Spleen (tissue), 13 donors: ENCODE measurements at regions of chr1 and their contacts with region 1.

Region 1: DNA sequence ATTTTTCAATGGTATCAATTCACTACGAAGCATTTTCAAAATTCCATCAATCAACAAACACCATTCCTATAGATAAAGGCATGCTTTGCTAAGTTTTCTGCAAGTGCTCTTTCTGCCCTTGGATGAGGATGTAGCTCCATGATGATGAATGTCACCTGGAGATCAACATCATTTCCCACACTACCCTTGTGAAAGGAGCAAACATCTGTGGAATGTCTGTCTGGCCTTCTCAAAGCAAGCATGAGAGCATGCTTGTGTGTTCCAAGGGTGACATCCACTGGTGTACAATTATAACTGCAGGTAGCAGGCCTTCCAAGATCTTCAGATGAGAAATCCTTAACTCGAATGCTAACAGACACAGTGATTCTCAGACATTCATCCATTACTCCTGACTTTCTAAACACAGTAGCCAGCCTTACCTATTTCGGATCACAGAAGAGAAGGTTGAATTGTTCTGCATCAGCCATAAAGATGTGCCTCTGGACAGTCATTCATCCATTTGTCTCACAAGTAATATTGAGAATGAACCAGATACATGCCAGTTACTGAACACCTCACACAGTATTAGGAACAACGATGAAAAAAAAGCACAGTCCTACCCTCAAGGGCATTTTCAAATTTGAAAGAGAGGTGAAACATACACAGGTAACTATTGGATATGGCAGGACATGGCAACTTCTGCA is 162.4 kb downstream of the TPR start:
- DNase-seq: no peak
- H3K4me3 ChIP-seq: no peak overlapping the region
- H3K27ac ChIP-seq: peak overlapping the region in 4 of 8 donors; percentile 12 to 39 (median 28)
- H3K4me1 ChIP-seq: peaks cover 0 to 15% (median 0%) of the 10 kb centered on the region in 6 donors
- H3K27me3 ChIP-seq: no peaks in the 10 kb centered on the region
- CTCF ChIP-seq: peak; percentile 37 to 90 (median 74)
- POLR2A ChIP-seq: no peak

Region 2: DNA sequence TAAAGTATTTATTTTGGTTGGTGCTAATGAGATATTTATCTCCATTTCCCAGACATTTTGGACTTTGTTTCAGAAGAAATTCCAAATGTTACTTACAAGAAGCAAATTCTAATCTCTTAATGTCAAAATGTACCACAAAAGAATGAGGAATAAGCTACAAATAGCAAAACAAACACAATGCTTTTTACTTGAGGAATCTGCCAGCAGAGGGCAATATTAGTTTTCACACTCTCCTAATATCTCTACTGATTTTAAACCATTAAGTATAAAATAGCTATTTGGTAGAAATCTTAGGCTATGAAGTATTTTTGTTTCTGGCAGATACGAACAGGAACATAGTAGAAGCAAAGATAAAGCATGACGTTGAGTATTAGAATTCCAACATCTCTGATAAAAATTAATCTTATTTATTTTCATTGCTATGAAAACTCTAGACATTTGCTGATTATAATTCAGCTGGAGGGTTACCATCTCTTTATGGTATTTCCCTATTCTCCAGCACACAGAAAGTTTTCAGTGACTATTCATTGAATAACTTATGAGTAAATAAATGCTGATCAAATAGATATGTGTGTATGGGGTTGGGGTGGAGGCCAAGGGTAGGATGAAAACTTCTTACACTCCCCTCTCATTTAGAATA is 491.9 kb before region 1 on chr1:
- intact Hi-C with region 1: loop called (anchors 10 kb)
- DNase-seq: no peak
- H3K4me3 ChIP-seq: no peak overlapping the region
- H3K27ac ChIP-seq: no peak overlapping the region
- H3K4me1 ChIP-seq: peaks cover 0 to 4% (median 0%) of the 10 kb centered on the region in 6 donors
- H3K27me3 ChIP-seq: no peaks in the 10 kb centered on the region
- CTCF ChIP-seq: peak in 8 of 11 experiments; percentile 14 to 61 (median 46)
- POLR2A ChIP-seq: no peak

Region 3: DNA sequence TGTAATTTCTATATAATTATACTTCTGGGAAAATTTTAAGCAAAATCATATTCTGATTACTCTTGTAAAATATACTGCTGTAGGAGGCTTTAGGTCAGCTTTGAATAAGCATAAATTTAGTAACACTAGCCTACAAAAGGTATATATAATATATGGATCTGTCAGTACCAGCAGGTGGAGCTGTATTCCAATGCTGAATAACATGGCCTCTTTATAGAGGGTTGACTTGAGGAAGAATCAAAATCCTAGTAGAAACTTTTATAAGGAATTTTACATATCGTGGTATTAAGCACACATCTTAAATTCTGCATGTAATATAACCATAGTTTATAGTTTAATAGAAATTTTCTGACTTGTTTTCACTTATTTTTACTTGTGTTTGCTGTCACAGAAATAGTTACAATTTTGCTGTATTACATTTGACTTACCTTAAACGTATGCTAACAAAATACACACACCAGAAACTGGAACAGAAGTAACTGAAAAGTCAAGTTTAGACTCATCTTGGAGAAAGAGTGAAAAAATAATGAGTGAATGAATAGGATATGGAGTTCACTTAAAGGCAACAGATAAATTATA is 399.2 kb before region 1 on chr1:
- intact Hi-C with region 1: loop called (anchors 10 kb)
- DNase-seq: no peak
- H3K4me3 ChIP-seq: no peak overlapping the region
- H3K27ac ChIP-seq: no peak overlapping the region
- H3K4me1 ChIP-seq: peaks cover 0 to 4% (median 0%) of the 10 kb centered on the region in 6 donors
- H3K27me3 ChIP-seq: no peaks in the 10 kb centered on the region
- CTCF ChIP-seq: peak in 8 of 11 experiments; percentile 8 to 59 (median 40)
- POLR2A ChIP-seq: no peak

Region 4: DNA sequence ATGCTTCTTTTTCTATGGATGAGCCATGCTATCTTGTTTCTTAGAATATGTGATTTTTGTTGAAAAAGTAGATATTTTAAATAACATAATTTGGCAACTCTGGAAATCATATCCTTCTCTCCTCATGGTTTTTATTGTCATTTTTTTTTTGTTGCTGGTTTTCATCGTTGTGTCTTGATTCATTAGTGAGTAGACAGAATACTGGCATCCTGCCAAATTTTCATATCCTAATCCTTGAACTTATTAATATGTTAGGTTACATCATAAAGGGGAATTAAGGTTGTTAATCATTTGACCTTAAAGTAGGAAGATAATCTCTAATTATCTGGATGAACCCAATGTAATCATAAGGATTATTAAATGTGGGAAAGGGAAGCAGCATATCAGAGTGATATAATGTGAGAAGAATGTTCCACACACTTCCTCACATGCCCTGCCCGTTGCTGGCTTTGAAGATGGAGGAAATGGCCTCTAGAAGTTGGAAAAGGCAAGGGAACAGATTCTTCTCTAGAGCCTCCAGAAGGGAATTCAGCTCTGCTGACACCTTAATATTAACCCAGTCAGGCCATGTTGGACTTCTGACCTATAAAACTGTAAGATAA is 178.8 kb before region 1 on chr1:
- intact Hi-C with region 1: no loop called
- DNase-seq: no peak
- H3K4me3 ChIP-seq: no peak overlapping the region
- H3K27ac ChIP-seq: peak overlapping the region in 6 of 8 donors; percentile 4 to 54 (median 24)
- H3K4me1 ChIP-seq: no peaks in the 10 kb centered on the region
- H3K27me3 ChIP-seq: no peaks in the 10 kb centered on the region
- CTCF ChIP-seq: no peak
- POLR2A ChIP-seq: no peak

Region 5: DNA sequence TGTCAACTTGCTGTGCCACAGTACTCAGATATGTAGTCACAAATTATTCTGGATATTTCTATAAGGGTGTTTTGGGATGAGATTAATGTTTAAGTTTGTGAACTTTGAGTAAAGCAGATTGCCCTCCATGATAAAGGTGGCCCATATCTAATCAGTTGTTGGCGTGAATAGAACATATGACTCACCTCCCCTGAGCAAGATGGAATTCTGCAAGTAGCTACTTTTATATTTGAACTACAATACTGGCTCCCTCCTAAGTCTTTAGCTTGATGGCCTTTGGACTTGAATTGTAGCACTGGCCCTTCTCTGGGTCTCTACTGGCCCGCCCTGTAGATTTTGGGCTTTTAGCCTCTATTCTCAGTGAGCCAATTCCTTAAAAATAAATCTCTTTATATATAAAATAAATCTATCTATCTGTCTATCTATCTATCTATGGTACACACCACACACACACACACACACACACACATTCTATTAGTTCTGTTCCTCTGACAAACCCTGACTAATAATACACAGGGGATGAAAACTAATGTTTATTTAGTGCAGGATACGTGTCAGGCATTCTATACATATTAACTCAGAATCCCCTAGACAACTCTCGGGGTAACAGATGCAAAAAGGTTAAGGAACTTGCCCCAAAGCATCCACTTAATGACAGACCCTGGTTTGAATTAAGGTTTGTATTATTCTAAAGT is 286.2 kb after region 1 on chr1:
- intact Hi-C with region 1: no loop called
- DNase-seq: no peak
- H3K4me3 ChIP-seq: no peak overlapping the region
- H3K27ac ChIP-seq: no peak overlapping the region
- H3K4me1 ChIP-seq: no peaks in the 10 kb centered on the region
- H3K27me3 ChIP-seq: no peaks in the 10 kb centered on the region
- CTCF ChIP-seq: no peak
- POLR2A ChIP-seq: no peak